ENCODE measurements at regions of chr1 and their contacts with region 1.

Region 1: GRCh38 chr1:172609528-172609927 is 49.4 kb upstream of the FASLG start:
- DNase-seq: no peak
- H3K4me3 Mint-ChIP-seq: no peak overlapping the region
- H3K27ac Mint-ChIP-seq: no peak overlapping the region
- H3K4me1 Mint-ChIP-seq: peaks cover 2% of the 10 kb centered on the region
- H3K27me3 Mint-ChIP-seq: no peaks in the 10 kb centered on the region

Region 2: GRCh38 chr1:172497230-172497629 is 112.3 kb before region 1 on chr1:
- CTCF ChIA-PET with region 1: no interaction called
- POLR2A ChIA-PET with region 1: no interaction called
- DNase-seq: no peak
- H3K4me3 Mint-ChIP-seq: no peak overlapping the region
- H3K27ac Mint-ChIP-seq: no peak overlapping the region
- H3K4me1 Mint-ChIP-seq: no peaks in the 10 kb centered on the region
- H3K27me3 Mint-ChIP-seq: peaks cover 12% of the 10 kb centered on the region

Region 3: GRCh38 chr1:172627702-172628101 is 18.2 kb after region 1 on chr1:
- CTCF ChIA-PET with region 1: no interaction called
- POLR2A ChIA-PET with region 1: no interaction called
- DNase-seq: no peak
- H3K4me3 Mint-ChIP-seq: no peak overlapping the region
- H3K27ac Mint-ChIP-seq: no peak overlapping the region
- H3K4me1 Mint-ChIP-seq: peaks cover 36% of the 10 kb centered on the region
- H3K27me3 Mint-ChIP-seq: peaks cover 39% of the 10 kb centered on the region

Region 4: GRCh38 chr1:172719694-172720138 is 110.2 kb after region 1 on chr1:
- CTCF ChIA-PET with region 1: interaction called, 18 read pairs
- POLR2A ChIA-PET with region 1: no interaction called
- DNase-seq: peak; percentile 46
- H3K4me3 Mint-ChIP-seq: no peak overlapping the region
- H3K27ac Mint-ChIP-seq: no peak overlapping the region
- H3K4me1 Mint-ChIP-seq: peaks cover 35% of the 10 kb centered on the region
- H3K27me3 Mint-ChIP-seq: peaks cover 4% of the 10 kb centered on the region

Region 5: DNA sequence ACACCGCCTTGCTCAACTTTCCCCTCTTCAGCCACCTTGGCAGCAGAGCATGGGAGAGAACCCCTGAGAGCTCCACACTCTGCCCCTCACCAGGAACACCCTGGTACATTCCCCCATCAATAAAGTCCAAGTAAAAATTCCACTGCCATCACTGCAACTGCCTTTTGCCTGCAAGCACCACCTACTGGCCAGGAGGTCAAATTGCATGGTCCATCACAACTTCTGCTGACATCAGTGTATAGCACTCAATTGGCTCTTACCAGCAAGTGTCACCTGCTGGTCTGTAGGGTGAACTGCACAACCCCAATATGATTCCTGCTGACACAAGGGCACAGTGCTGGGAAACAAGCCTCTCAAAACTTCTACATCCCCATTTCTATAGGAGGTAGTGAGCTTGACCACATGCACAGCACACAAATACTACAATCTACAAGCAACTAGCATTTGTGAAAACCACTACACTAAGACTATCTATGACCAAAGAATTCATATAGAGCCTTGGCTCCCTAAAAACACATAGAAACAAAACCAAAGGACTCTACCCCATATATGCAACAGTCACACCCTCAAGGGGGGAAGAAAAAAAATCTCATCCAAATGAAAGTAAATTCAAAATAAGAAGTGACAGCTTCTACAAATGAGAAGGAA is 118.6 kb after region 1 on chr1:
- CTCF ChIA-PET with region 1: interaction called, 17 read pairs
- POLR2A ChIA-PET with region 1: no interaction called
- DNase-seq: peak; percentile 57
- H3K4me3 Mint-ChIP-seq: no peak overlapping the region
- H3K27ac Mint-ChIP-seq: no peak overlapping the region
- H3K4me1 Mint-ChIP-seq: peaks cover 24% of the 10 kb centered on the region
- H3K27me3 Mint-ChIP-seq: peaks cover 27% of the 10 kb centered on the region